ENCODE measurements at regions of chr2 and their contacts with region 1.

Region 1: DNA sequence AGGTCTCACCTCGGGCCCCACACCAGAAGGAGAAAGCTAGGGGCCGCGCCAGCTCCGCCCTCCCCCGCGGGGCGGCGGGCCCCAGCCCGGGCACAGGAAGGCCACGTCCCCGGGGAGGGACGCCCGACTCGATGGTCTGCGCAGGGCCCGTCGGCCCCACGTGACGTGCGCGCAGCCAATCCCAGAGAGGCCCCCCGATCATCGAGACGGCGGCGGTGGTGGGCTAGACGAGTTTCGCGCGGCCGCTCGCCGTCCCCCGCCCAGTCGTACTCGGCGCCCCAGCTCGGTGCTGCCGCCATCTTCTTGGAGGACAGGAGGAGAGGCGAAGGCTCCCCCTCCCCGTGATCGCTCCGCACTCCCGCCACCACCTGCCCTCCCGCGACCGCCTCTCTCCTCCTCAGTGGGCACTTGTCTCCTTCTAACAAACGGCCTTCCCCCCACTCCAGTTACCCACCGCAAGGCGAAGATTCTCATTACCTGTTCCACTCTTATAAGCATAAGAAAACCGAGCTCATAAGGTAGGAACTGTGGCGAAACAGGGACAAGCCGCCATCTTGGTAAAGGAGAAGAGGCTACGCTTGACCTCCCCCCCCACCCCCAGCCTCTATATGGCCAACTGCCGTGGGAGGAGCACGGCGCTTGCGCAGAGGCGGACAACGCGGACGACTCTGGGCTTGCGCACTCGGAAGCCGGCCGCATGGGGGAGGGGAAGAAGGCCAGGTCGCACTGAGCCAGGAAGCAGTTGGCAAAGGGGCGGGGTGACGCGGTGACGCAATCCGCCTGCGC is at the start of gene HDLBP:
- DNase-seq: peak; percentile 100
- ATAC-seq: peak; percentile 64 to 86 (median 71)
- H3K4me3 ChIP-seq: peak within 1 kb of the TSS; percentile 98
- H3K4me3 Mint-ChIP-seq: peak within 1 kb of the TSS; percentile 97
- H3K27ac ChIP-seq: peak within 1 kb of the TSS; percentile 100
- H3K27ac Mint-ChIP-seq: peak within 1 kb of the TSS; percentile 96 to 99
- H3K4me1 ChIP-seq: peaks cover 32% of the 10 kb centered on the region
- H3K4me1 Mint-ChIP-seq: peaks cover 61 to 78% of the 10 kb centered on the region in 2 donors
- H3K27me3 ChIP-seq: no peaks in the 10 kb centered on the region
- H3K27me3 Mint-ChIP-seq: no peaks in the 10 kb centered on the region
- CTCF ChIP-seq: peak; percentile 21
- total RNA-seq, gene HDLBP: 170 to 200 (median 177) TPM

Region 2: GRCh38 chr2:241261628-241262027 is 53.7 kb before region 1 on chr2:
- intact Hi-C with region 1: no loop called
- DNase-seq: no peak
- ATAC-seq: no peak
- H3K4me3 ChIP-seq: no peak overlapping the region
- H3K4me3 Mint-ChIP-seq: no peak overlapping the region
- H3K27ac ChIP-seq: no peak overlapping the region
- H3K27ac Mint-ChIP-seq: peak overlapping the region; percentile 20 to 33
- H3K4me1 ChIP-seq: peaks cover 9% of the 10 kb centered on the region
- H3K4me1 Mint-ChIP-seq: peaks cover 22 to 26% of the 10 kb centered on the region in 2 donors
- H3K27me3 ChIP-seq: no peaks in the 10 kb centered on the region
- H3K27me3 Mint-ChIP-seq: no peaks in the 10 kb centered on the region
- CTCF ChIP-seq: no peak

Region 3: DNA sequence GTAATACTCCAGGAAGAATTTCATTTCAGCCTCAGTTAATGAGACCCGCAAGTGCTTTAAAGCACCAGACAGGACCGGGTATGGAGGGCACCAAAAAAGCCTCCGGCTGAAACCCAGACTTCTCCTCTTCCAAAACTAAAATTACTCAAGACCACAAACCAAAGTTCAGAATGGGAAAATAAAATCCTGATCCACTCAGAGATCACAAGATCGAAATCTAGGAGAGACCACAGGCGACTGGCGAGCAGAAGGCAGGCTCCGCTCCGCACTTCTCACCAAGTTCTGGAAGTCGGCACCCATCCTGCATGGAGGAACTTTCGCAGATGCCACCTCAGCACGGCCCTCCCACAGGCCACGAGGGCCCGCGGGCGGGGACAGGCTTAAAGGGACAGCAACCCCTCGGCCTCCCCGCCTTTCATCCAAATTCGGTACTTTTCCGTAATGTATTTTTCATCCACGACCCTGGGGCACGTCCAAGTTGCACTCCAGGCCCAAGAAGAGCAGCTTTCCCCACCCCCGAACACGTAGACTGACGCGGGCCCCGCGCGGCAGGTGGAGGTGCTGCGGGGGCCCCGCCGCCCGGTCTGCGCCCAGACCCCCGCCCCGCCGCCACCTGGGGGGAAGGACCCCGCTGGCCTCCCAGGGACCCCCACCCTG is 43.5 kb before region 1 on chr2:
- intact Hi-C with region 1: loop called (anchors 5 kb)
- DNase-seq: peak; percentile 55 to 73
- ATAC-seq: peak; percentile 77 to 78 (median 77)
- H3K4me3 ChIP-seq: peak overlapping the region; percentile 66
- H3K4me3 Mint-ChIP-seq: peak overlapping the region; percentile 95
- H3K27ac ChIP-seq: peak overlapping the region; percentile 42
- H3K27ac Mint-ChIP-seq: peak overlapping the region; percentile 86
- H3K4me1 ChIP-seq: peaks cover 28% of the 10 kb centered on the region
- H3K4me1 Mint-ChIP-seq: peaks cover 50 to 51% of the 10 kb centered on the region in 2 donors
- H3K27me3 ChIP-seq: no peaks in the 10 kb centered on the region
- H3K27me3 Mint-ChIP-seq: no peaks in the 10 kb centered on the region
- CTCF ChIP-seq: no peak

Region 4: GRCh38 chr2:241443486-241444223 is 128.4 kb after region 1 on chr2:
- intact Hi-C with region 1: loop called (anchors 5 kb)
- DNase-seq: peak; percentile 80 to 95
- ATAC-seq: peak; percentile 92 to 94 (median 92)
- H3K4me3 ChIP-seq: no peak overlapping the region
- H3K4me3 Mint-ChIP-seq: peak overlapping the region; percentile 72
- H3K27ac ChIP-seq: no peak overlapping the region
- H3K27ac Mint-ChIP-seq: peak overlapping the region; percentile 78 to 86
- H3K4me1 ChIP-seq: peaks cover 31% of the 10 kb centered on the region
- H3K4me1 Mint-ChIP-seq: peaks cover 19 to 21% of the 10 kb centered on the region in 2 donors
- H3K27me3 ChIP-seq: peaks cover 41% of the 10 kb centered on the region
- H3K27me3 Mint-ChIP-seq: peaks cover 12 to 14% of the 10 kb centered on the region in 2 donors
- CTCF ChIP-seq: no peak

Region 5: DNA sequence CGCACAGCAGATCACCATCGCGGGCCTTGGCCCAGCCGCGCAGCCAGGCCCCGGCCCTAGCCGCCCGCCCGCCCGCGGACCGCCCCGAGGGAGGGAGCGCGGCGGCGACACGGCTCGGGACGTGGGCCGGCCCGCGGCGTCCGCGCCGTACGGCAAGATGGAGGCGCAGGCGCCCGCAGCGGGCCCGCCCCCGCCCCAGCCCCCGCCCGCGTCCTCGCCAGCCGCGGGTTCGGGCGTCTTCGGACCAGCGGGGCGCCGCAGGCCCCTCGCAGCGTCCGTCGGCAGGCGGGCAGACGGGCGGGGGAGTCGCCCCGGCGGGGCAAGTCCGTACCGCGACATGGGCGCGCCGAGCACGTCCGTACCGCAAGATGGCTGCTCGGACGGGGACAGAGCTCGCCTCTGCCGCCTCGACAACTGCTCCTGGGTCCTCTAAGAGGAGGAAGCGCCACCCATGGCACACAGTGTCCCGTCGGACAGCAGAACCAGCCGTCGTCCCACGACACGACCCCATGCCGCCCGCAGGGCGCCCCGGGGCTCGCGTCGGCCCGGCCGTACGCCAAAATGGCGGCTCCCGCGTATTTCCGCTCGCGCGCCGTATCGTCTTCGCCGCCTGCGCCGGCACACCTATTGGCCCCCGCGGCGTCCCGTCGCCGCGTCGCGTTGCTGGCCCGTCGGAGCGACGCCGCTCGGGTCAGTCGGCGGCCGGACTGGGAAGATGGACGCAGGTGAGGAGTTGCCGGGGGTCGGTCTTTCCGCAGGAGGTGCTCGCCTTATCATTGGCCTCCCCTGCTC is 321.9 kb after region 1 on chr2 and contains the starts of genes ATG4B and THAP4:
- intact Hi-C with region 1: loop called (anchors 5 kb)
- DNase-seq: peak; percentile 79 to 88
- ATAC-seq: peak; percentile 73 to 86 (median 80)
- H3K4me3 ChIP-seq: peak within 1 kb of the TSS; percentile 97
- H3K4me3 Mint-ChIP-seq: peak within 1 kb of the TSS; percentile 93
- H3K27ac ChIP-seq: peak within 1 kb of the TSS; percentile 97
- H3K27ac Mint-ChIP-seq: peak within 1 kb of the TSS; percentile 81 to 91
- H3K4me1 ChIP-seq: peaks cover 35% of the 10 kb centered on the region
- H3K4me1 Mint-ChIP-seq: peaks cover 48 to 51% of the 10 kb centered on the region in 2 donors
- H3K27me3 ChIP-seq: no peaks in the 10 kb centered on the region
- H3K27me3 Mint-ChIP-seq: no peaks in the 10 kb centered on the region
- CTCF ChIP-seq: no peak
- total RNA-seq, gene ATG4B: 106 to 171 (median 139) TPM
- total RNA-seq, gene THAP4: 19.8 to 29.2 (median 27.8) TPM

Region 6: DNA sequence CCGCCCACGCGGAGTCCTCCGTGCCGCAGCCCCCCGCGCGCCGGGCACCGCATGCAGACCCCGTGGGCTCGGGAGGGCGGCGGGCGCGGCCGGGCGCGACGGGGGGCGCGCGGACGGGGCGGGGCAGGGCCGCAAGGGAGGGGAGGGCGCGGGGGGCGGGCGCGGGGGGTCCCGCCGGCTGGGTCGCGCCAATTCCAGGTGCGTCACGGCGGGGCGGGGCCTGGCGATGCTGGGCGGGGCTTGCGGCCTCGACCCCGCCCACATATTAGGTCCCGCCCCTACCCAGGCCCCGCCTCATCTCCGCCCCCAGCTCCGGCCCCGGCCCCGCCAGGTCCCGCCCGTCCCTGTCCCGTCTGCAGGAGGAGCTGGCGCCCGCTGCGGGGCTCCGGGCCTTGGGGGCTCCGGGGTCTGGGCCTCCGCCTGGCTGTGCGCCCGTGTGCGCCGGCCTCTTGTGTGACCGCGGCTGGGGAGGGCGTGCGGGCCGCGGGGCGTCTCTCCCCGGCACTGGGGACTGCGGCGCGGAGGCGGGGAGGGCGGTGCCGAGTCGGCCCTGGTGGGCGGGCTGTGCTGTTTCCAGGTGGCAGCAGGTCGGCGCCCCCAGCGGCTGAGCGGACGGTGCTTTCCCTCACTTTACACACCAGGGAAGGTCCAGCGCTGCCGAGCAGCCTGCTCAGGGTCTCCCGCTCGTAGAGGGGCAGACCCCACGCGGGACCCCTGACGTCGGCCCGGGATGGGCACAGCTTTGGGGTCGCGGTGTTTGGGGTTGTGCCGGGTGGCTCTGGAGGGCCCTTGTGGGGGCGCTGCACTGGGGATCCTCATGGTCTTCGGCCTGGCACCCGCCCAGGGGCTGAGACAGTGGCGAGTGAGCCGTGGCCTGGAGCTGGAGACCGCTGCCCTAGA is 387.1 kb after region 1 on chr2:
- intact Hi-C with region 1: loop called (anchors 1 kb)
- DNase-seq: peak; percentile 86 to 93
- ATAC-seq: peak; percentile 81 to 94 (median 85)
- H3K4me3 ChIP-seq: peak overlapping the region; percentile 59
- H3K4me3 Mint-ChIP-seq: peak overlapping the region; percentile 86
- H3K27ac ChIP-seq: peak overlapping the region; percentile 76
- H3K27ac Mint-ChIP-seq: peak overlapping the region; percentile 80 to 84
- H3K4me1 ChIP-seq: peaks cover 15% of the 10 kb centered on the region
- H3K4me1 Mint-ChIP-seq: peaks cover 7 to 13% of the 10 kb centered on the region in 2 donors
- H3K27me3 ChIP-seq: no peaks in the 10 kb centered on the region
- H3K27me3 Mint-ChIP-seq: no peaks in the 10 kb centered on the region
- CTCF ChIP-seq: peak; percentile 52

Measured in natural killer cell (primary cell).